Mammary epithelial cell (primary cell): ENCODE measurements at regions of chr2 and their contacts with region 1.

Region 1: DNA sequence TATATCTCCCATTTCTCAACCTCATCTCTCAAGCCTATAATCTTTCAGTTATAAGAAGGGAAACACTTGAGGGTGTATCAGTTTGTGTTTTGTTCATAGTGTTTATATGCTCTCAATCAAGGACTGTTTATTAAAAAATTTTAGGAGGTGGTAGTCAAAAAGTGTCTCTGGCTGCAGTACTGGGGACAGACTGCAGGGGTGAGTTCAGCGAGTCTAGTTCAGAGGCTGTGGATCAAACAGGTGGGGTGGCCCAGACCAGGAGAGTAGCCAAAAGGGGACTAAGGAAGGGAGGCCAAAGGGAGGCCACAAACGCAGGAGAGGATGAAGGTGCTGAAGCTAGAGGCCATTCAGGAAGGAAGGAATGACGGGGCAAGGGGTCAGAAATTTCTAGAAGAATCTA is 136.3 kb downstream of the MSH2 start:
- DNase-seq: no peak
- H3K4me3 ChIP-seq: no peak overlapping the region
- H3K27ac ChIP-seq: no peak overlapping the region
- H3K4me1 ChIP-seq: no peaks in the 10 kb centered on the region
- H3K27me3 ChIP-seq: peaks cover 4% of the 10 kb centered on the region
- CTCF ChIP-seq: peak; percentile 14 to 26

Region 2: DNA sequence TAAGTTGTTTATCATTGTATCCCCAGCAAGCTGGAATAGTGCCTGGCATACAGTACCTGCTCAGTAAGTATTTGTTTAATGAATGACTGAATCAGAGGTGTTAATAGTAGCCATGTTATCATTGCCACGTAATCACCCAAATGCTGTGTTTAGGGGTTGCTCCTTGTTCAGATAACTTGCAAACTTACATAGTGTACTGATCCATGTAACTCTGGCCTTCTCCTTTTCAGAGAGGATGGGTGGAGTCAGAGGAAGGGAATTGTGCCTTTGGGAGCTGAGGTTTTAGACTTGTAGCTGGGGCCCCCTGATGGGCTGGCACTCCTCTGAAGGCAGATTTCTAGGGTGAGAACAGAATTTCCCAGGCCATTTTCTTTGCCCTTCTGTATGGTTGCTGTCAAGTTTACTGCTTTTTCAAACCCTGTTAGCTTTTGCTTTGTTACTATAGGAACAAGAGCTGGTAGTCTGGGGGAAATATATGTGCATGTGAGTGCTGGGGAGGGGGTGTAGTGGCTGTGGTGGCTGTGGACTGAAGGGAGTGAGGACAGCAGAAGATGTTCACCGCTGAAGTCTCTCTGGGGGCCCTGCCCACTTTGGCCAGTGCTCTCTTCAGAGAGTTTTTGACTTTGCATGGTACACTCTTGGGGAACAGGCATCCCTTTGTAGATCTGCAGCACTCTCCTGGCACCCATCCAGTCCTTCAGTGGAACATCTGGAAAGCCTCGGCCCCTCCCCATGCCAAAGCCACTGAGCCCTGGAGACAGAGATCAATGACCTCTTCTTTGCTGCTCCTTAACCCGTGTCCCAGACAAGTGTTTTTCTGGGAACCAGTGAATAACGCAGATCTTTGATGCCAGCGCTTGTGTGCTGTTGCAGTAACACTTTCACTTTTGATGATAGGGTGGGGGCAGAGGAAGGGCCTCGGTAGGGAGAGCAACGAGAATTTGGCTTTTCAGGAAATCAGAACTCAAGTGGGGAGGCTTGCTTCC is 1678.8 kb before region 1 on chr2:
- CTCF ChIA-PET with region 1: no interaction called
- dilution Hi-C with region 1: no loop called
- in situ Hi-C with region 1: no loop called
- intact Hi-C with region 1: no loop called
- DNase-seq: peak; percentile 25
- H3K4me3 ChIP-seq: peak overlapping the region in 2 of 3 experiments; percentile 10 to 11
- H3K27ac ChIP-seq: no peak overlapping the region
- H3K4me1 ChIP-seq: no peaks in the 10 kb centered on the region
- H3K27me3 ChIP-seq: no peaks in the 10 kb centered on the region
- CTCF ChIP-seq: peak in 1 of 2 donors; percentile 13

Region 3: GRCh38 chr2:47486841-47487497 is 52.3 kb before region 1 on chr2:
- CTCF ChIA-PET with region 1: no interaction called
- dilution Hi-C with region 1: loop called (anchors 5 kb)
- in situ Hi-C with region 1: no loop called
- intact Hi-C with region 1: no loop called
- DNase-seq: no peak
- H3K4me3 ChIP-seq: no peak overlapping the region
- H3K27ac ChIP-seq: no peak overlapping the region
- H3K4me1 ChIP-seq: peaks cover 18% of the 10 kb centered on the region
- H3K27me3 ChIP-seq: no peaks in the 10 kb centered on the region
- CTCF ChIP-seq: no peak

Region 4: GRCh38 chr2:47617028-47617427 is 77.8 kb after region 1 on chr2:
- CTCF ChIA-PET with region 1: no interaction called
- dilution Hi-C with region 1: loop called (anchors 5 kb)
- in situ Hi-C with region 1: no loop called
- intact Hi-C with region 1: no loop called
- DNase-seq: no peak
- H3K4me3 ChIP-seq: no peak overlapping the region
- H3K27ac ChIP-seq: no peak overlapping the region
- H3K4me1 ChIP-seq: no peaks in the 10 kb centered on the region
- H3K27me3 ChIP-seq: no peaks in the 10 kb centered on the region
- CTCF ChIP-seq: no peak

Region 5: DNA sequence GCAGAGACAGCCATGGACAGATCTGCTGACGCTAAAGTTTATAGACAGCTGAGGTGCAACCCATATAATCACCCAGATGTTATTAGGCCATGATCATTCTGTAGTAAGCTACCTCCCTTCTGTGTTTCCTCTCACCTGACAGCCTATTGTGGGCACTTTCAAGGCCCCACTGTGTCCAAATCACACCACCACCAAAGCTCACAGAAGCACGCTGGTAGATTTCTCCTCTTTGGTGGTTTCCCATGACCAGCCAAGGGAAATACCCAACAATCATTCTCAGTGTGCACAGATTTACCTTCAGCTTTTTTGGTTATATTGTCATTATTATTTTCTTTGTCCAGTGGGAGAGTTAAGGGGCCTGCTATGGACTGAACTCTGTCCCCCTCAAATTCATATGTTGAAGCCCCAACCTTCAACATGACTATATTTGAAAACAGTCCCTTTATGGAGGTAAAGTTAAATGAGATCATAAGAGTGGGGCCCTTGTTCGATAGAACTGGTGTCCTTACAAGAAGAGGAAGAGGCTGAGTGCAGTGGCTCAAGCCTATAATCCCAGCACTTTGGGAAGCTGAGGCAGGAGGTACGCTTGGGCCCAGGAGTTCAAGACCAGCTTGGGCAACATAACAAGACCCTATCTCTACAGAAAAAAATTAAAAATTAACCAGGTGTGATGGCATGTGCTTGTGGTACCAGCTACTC is 169.7 kb after region 1 on chr2:
- CTCF ChIA-PET with region 1: interaction called, 10 read pairs
- dilution Hi-C with region 1: no loop called
- in situ Hi-C with region 1: no loop called
- intact Hi-C with region 1: no loop called
- DNase-seq: no peak
- H3K4me3 ChIP-seq: no peak overlapping the region
- H3K27ac ChIP-seq: no peak overlapping the region
- H3K4me1 ChIP-seq: no peaks in the 10 kb centered on the region
- H3K27me3 ChIP-seq: peaks cover 2% of the 10 kb centered on the region
- CTCF ChIP-seq: no peak